ENCODE measurements at regions of chr15 and their contacts with region 1.

Region 1: DNA sequence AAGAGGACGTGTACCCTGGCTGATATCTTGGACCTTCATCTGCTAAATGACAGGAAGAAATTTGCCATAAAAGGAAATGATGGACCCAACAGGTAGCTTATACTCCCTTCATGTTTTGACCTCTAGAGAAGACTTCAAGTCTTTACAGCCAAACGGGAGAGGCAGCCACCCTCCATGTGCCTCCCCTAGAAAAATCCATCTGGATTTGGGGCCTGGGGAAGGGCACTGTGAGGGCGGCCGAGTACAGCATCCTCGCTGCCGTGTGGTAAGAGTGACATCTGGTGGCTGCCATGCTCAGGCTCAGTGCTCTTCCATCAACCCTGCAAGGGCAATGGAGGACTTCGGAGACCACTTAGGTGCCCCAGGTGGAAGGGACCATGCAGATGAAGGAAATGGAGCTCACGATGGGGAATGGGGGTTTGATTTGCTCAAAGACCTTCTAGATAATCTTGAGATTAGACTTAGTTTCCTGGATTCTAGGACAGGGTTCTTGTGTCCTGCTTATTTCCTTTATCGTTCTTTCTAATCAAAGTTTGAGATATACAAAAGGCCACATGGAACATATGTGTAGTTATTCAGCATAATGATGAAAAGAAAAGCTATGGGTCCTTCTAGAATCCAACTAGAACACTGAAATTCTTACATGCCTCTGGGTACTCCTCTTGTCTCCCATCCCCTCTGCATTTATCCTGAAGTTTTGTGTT is 44.4 kb downstream of the AQP9 start:
- DNase-seq: peak; percentile 6 to 61 (median 28)
- ATAC-seq: peak in 3 of 4 donors; percentile 90 to 91 (median 90)
- H3K4me3 ChIP-seq: no peak overlapping the region
- H3K27ac ChIP-seq: no peak overlapping the region
- H3K4me1 ChIP-seq: no peaks in the 10 kb centered on the region
- H3K27me3 ChIP-seq: no peaks in the 10 kb centered on the region
- CTCF ChIP-seq: peak in 3 of 4 donors; percentile 58 to 69 (median 59)

Region 2: DNA sequence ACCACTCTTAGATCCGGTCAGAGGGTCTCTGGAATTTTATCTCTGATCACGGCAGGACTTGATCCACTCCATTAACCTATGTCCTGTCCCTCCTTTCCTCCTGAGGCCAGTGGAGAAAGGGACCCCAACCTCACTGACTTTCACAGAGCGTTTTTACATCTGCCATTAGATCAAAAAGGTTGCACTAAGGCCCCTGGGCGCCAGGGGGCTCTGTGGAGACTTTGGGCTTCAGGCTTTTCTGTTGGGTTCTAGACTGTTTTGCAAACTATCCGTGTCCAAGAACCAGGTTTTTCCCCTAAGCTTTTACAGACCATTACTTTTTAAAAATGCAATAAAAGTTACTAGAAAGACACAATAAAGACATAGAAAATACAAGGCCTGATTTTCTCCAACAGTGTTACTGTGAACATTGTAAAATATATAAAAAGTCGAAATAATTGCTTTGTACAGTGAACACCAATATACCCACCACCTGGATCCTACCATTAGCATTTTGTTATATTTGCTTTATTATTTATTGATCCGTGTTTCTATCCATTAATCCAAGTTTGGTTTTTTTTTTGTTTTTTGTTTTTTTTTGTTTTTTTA is 316.4 kb before region 1 on chr15:
- intact Hi-C with region 1: loop called in 1 of 3 experiments (anchors 5 kb)
- DNase-seq: peak; percentile 31 to 87 (median 60)
- ATAC-seq: peak; percentile 77 to 92 (median 87)
- H3K4me3 ChIP-seq: no peak overlapping the region
- H3K27ac ChIP-seq: no peak overlapping the region
- H3K4me1 ChIP-seq: no peaks in the 10 kb centered on the region
- H3K27me3 ChIP-seq: no peaks in the 10 kb centered on the region
- CTCF ChIP-seq: peak; percentile 30 to 63 (median 58)